Activated CD8-positive, alpha-beta T cell treated with anti-CD3 and anti-CD28 coated beads, Interleukin-2, amount 10 ng/mL, durations not matched to agents 7 days and 5 days (primary cell): ENCODE measurements at regions of chr5 and their contacts with region 1.

Region 1: DNA sequence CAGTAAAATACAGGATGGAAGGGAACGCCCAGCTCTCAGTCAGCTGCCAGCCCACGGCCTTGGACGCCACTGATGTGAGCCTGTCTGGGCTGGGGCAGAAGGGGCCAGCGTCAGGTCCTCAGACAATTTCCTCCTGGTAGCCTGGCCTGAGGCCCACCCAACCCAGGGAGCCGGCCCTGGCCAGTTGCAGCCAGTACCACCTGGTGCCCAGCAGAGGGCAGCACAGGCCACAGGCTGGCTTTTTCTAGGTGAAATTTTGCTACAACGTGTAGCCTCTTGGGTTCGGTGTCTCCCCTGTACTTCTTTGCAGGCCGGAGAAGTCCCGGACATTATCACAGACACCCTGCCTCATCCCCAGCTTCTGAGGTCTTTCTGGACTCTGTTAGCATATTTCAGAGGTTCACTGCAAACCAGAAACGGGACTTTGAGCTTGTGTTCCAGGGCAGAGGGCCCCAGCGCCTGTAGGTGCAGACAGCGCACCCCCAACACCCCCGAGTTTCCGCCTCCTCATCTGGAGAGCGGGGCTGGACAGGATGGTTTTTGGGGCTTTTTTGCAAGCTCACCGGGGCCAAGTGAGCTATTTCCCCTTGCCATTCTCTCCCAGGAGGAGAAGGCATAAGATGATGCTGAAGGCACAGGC is 45.9 kb upstream of the KCNMB1 start:
- DNase-seq: peak; percentile 64
- ATAC-seq: peak; percentile 77
- H3K4me3 Mint-ChIP-seq: no peak overlapping the region
- H3K27ac Mint-ChIP-seq: no peak overlapping the region
- H3K4me1 Mint-ChIP-seq: no peaks in the 10 kb centered on the region
- H3K27me3 Mint-ChIP-seq: no peaks in the 10 kb centered on the region

Region 2: DNA sequence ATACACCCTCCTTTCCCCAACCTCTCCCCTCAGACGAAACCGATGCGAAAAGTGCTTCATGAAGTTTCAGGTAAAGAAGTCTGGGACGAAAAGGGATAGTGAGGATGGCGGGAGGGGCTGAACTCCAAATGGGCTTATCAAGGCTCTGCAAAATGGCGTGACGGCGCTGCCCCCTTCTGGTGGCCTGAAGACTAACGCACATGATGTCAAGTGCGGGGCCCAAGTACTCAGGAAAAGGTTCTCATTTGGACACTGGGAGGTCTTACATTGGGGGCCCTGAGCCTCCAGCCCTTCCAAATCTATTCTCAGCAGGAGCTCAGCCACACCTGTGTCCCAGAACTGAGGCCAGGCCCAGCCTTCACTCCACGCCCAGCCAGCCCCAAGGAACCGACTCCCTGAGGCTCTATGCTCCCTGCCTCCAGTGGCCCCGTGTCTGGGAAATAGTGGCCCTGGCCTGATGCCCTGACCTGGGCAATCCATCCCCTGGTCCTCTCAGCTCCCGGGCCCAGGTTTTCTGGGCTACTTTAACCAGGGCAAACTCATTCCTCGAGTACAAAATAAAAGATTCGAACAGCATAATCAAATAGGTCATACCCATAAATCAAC is 188.6 kb after region 1 on chr5:
- CTCF ChIA-PET with region 1: interaction called, 10 read pairs
- POLR2A ChIA-PET with region 1: no interaction called
- DNase-seq: peak; percentile 34
- ATAC-seq: no peak
- H3K4me3 Mint-ChIP-seq: no peak overlapping the region
- H3K27ac Mint-ChIP-seq: no peak overlapping the region
- H3K4me1 Mint-ChIP-seq: no peaks in the 10 kb centered on the region
- H3K27me3 Mint-ChIP-seq: peaks cover 2% of the 10 kb centered on the region

Region 3: DNA sequence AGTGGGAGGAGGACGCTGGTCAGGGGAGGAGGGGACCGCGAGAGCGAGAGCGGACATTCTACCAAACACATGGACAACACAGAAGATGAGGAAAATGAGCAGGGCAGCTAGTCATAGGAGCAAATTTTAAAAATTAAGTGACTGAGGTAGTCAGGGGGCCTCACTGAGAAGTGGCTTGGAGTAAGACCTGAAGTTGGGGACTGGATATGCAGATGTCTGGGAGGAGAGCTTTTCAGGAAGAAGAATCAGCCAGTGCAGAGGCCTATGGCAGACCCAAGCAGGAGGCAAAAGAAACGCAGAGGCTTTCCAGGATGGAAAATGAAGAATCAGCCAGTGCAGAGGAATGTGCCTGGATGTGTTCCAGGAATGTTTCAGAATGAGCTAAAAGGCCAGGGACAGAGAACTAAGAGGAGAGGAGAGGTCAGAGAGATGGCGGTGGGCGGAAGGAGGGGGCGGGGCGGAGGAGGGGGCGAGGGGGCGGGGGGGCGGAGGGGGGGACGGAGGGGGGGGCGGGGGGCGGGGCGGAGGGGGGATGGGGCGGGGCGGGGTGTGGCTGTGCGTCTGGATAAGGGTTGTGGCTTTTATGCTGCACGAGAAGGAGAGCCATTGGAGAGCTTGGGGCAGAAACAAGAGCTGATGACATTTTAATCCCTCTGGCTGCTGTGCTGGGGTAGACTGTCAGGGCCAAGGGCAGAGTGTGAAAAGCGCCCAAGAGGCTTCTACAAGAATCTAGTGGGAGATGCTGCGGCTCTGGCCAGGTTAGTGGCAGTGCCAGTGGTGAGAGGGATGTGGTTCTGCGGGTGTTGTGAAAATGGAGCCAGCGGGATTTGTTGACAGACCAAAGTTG is 198.4 kb after region 1 on chr5:
- CTCF ChIA-PET with region 1: interaction called, 68 read pairs
- POLR2A ChIA-PET with region 1: no interaction called
- DNase-seq: no peak
- ATAC-seq: peak; percentile 24
- H3K4me3 Mint-ChIP-seq: no peak overlapping the region
- H3K27ac Mint-ChIP-seq: no peak overlapping the region
- H3K4me1 Mint-ChIP-seq: peaks cover 11% of the 10 kb centered on the region
- H3K27me3 Mint-ChIP-seq: peaks cover 11% of the 10 kb centered on the region